ENCODE measurements at regions of chr6 and their contacts with region 1.

Region 1: DNA sequence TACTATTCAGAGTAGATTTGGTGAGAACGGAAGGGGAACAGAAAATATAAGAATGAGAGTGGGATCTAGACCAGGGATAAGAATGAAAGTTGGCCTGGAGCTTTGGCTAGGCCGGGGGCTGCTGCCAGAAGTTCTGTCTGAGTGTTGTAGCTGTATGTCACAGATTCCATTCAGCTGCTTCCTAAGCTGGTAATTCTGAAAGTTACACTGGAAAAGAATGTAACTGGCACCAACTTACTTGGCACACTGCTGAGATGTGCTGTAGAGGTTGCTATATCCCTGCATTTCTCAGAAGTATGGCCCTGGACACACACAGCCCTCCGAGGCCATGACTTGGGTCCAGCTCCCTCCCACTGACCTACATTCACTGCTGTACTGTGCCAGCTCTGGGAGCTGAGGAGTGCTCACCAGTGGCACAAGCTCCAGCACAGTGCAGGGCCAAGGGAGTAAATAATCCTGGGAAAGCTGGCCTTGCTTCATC is 25.8 kb upstream of the TMEM217 start:
- DNase-seq: no peak
- H3K4me3 Mint-ChIP-seq: no peak overlapping the region
- H3K27ac Mint-ChIP-seq: no peak overlapping the region
- H3K4me1 Mint-ChIP-seq: peaks cover 59% of the 10 kb centered on the region
- H3K27me3 Mint-ChIP-seq: no peaks in the 10 kb centered on the region

Region 2: GRCh38 chr6:37272834-37273566 is 10.7 kb before region 1 on chr6:
- intact Hi-C with region 1: loop called (anchors 1 kb)
- DNase-seq: no peak
- H3K4me3 Mint-ChIP-seq: peak overlapping the region; percentile 81
- H3K27ac Mint-ChIP-seq: peak overlapping the region; percentile 92
- H3K4me1 Mint-ChIP-seq: peaks cover 82% of the 10 kb centered on the region
- H3K27me3 Mint-ChIP-seq: no peaks in the 10 kb centered on the region

Measured in activated T-helper 1 cell treated with anti-CD3 and anti-CD28 coated beads, Interleukin-12 subunit alpha, Interleukin-12 subunit beta, Interleukin-2, Interleukin-4 antibody, amounts not matched to agents 30 ng/mL and 10 ng/mL and 1 ng/mL, durations not matched to agents 14 hours and 24 hours and 36 hours (primary cell).